RWPE1 (cell line): ENCODE measurements at regions of chr5 and their contacts with region 1.

Region 1: DNA sequence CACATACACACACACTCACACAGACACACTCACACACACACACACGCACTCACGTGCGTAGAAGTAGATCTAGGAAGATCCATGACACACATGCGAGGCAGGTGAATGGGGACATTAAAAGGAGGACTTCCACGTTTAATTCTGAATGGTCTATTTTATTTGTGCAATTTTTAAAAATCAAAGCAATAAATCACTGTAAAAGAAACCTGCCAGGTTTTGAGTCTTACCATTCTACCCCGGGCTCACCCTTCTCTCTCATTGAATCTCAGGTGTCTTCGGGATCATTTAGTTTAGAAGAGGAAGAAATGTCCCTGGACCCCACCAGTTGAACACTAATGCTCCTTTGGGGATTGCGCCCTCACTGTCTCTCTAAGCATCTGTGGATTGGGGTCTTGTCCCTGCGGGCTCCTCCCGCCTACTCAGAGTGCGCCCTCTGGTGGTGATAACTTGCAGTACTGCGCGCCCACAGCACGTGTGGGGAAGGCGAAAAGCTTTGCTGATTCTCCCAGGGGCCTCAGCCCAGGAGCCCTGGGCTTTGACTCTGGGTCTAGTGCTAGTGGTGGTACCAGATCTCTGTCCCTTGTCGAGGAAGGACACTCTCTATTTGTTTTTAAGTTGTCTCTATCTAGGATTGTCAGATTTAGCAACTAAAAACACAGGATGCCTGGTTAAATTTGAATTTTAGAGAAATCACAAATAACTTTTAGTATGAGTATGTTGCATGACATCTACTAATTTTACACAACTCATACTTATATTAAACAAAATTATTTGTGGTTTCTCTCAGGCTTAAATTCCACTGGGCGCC is 34.8 kb downstream of the BOD1 start:
- DNase-seq: peak; percentile 64
- H3K27ac ChIP-seq: no peak overlapping the region
- CTCF ChIP-seq: peak; percentile 92

Region 2: GRCh38 chr5:173293817-173294672 is 287.6 kb before region 1 on chr5:
- CTCF ChIA-PET with region 1: interaction called, 14 read pairs
- POLR2A ChIA-PET with region 1: no interaction called
- DNase-seq: peak; percentile 88
- H3K27ac ChIP-seq: no peak overlapping the region
- CTCF ChIP-seq: peak; percentile 93

Region 3: DNA sequence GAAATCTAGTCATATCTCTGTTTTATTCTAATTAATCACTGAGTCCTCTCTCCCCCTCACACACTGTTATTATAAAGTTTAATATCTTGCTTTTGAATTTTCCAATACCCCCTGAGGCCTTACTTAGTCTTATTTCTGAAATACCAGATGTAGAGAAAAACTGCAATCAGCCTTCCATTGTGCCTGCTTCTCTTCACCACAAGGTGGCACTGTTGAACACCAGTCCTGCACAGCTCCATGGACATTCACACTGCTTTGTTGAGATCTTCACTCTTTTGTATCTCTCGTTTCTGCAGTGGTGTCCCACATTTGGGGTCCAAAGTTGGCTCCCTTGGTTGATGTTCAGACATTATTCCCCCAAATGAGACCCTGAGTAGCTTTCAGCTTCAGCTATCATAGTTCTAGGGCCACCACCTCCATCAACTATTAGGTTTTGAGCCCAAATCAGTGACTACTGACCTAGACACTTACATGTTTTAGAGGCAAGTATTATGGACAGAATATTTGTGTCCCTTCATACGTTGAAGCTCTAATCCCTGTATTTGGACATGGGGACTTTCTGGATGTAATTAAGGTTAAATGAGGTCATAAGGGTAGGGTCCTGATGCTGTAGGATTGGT is 10.5 kb after region 1 on chr5:
- CTCF ChIA-PET with region 1: interaction called, 15 read pairs
- POLR2A ChIA-PET with region 1: no interaction called
- DNase-seq: no peak
- H3K27ac ChIP-seq: no peak overlapping the region
- CTCF ChIP-seq: peak; percentile 57